Activated CD4-positive, alpha-beta T cell treated with anti-CD3 and anti-CD28 coated beads, Interleukin-2, amount 10 ng/mL, durations not matched to agents 7 days and 5 days (primary cell): ENCODE measurements at regions of chr19 and their contacts with region 1.

Region 1: DNA sequence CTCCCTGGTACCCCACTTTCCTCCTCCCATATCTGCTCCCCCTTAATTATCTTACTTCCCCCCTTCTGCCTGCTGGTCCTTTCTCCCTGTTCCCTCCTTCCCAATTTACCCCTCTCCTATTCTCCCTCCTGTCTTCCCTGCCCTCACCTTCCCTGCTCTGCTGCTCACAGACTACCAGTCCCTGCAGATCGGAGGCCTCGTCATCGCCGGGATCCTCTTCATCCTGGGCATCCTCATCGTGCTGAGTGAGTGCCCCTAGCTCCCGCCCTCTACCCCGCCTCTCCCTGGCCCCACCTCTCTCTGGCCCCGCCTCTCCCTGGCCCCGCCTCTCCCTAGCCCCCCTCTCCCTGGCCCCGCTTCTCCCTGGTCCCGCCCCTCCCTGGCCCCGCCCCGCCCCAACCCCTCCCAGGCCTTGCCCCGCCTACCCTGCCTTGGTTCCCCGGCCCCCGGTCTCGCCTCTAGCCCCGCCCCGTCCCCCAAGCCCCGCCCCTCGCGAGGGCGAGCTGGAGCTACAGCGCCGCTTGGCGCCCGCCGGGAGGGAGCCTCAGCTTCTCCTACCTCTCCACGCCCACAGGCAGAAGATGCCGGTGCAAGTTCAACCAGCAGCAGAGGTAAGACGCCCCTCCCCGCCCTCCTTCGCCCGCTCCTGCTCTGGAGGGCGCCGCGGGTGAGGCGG is 2.0 kb upstream of the FXYD7 start:
- DNase-seq: peak; percentile 96
- H3K4me3 Mint-ChIP-seq: peak overlapping the region; percentile 68
- H3K27ac Mint-ChIP-seq: peak overlapping the region; percentile 85
- H3K4me1 Mint-ChIP-seq: peaks cover 37% of the 10 kb centered on the region
- H3K27me3 Mint-ChIP-seq: peaks cover 20% of the 10 kb centered on the region

Region 2: DNA sequence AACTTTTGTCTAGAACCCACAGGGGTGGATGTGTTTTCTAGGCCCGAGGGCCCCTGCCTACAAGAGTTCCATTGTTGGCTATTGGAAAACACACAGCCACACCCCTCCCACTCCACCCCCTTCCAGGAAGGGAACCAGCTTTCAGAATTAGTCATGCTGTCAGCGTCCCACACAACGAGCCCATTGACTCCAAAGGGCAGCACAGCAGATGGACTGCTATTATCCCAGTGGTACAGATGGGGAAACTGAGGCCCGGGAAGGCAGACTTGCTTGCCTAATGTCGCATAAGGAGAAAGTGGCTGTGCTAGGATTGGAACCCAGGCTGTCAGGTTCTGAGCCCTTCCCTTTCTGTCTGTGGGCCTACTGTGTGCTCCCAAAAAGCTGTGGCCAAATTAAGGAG is 33.6 kb before region 1 on chr19:
- CTCF ChIA-PET with region 1: no interaction called
- POLR2A ChIA-PET with region 1: no interaction called
- DNase-seq: no peak
- H3K4me3 Mint-ChIP-seq: no peak overlapping the region
- H3K27ac Mint-ChIP-seq: no peak overlapping the region
- H3K4me1 Mint-ChIP-seq: no peaks in the 10 kb centered on the region
- H3K27me3 Mint-ChIP-seq: peaks cover 1% of the 10 kb centered on the region

Region 3: DNA sequence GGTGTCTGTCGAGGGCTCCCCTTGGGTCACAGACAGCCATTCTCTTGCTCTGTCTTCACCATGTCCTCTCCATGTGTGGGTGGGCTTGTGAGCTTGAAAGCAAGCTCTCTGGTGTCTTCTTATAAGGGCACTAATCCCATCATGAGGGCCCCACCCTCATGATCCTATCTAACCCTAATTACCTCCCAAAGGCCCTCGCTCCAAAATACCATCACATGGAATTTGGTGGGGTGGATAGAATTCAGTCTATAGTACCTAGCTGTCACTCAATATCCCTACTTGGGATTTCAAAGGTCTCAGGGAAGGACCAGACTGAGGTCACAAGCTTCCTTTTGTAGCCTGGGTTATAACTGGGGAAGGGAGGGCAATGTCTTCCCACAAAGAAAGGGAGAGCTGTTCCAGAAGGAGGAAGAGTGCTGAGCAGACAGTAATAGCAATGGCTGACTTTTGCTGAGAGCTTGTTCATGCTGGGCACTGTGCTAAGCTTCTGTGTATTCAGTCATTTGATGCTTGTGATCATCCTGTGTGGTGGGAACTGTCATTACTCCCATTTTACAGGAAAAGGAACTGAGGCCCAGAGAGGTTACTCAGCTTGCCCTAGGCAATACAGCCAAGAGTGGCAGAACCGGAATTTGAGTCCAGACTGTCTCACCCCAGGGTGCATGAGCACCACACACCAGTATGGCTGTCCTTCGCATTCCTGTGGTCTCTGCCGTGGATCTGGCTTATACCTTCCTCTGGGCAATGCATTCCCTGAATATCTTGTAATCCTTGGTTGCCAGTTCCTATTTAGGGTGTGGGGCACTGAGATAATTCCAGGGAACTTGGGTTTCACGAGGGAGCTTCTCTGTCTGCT is 21.6 kb after region 1 on chr19:
- CTCF ChIA-PET with region 1: interaction called, 10 read pairs
- POLR2A ChIA-PET with region 1: no interaction called
- DNase-seq: no peak
- H3K4me3 Mint-ChIP-seq: no peak overlapping the region
- H3K27ac Mint-ChIP-seq: no peak overlapping the region
- H3K4me1 Mint-ChIP-seq: peaks cover 50% of the 10 kb centered on the region
- H3K27me3 Mint-ChIP-seq: no peaks in the 10 kb centered on the region

Region 4: DNA sequence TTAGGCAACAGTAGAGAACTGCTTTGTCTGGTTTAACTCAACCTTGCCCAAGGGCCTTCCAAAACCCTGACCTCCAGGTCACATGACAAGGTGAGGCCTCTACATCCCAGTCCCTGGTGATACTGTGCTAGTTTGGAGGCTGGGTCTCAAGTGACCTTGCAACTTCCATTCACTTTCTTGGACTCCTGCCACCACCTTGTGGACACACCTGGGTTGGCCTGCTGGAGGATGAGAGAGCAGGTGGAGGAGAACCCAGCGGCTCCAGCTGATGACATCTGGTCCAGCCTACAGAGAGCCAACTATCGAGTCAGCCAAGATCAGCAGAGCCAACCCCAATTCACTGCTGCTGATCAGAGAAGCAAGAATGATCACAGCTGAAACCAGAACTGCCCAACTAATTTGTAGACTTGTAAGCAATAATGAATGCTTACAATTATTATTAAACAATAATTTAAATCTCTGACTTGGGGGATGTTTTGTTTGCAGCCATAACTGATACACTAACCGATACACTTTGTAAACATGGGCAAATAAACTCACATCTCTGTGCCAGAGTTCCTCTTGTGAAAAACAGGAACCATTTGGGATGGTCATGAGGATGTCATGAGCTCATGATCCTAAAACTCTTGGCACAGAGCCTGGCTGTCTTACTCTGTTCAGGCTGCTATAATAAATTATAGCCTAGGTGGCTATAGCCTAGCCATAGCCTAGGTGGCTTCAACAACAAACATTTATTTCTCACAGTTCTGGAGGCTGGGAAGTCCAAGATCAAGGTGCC is 76.0 kb after region 1 on chr19:
- CTCF ChIA-PET with region 1: interaction called, 13 read pairs
- POLR2A ChIA-PET with region 1: no interaction called
- DNase-seq: peak; percentile 69
- H3K4me3 Mint-ChIP-seq: no peak overlapping the region
- H3K27ac Mint-ChIP-seq: peak overlapping the region; percentile 33
- H3K4me1 Mint-ChIP-seq: peaks cover 59% of the 10 kb centered on the region
- H3K27me3 Mint-ChIP-seq: no peaks in the 10 kb centered on the region